MCF 10A (cell line): ENCODE measurements at regions of chr15 and their contacts with region 1.

Region 1: GRCh38 chr15:64731012-64731806 is 44.2 kb downstream of the RBPMS2 start:
- DNase-seq: peak; percentile 88
- H3K4me3 Mint-ChIP-seq: no peak overlapping the region
- H3K27ac Mint-ChIP-seq: no peak overlapping the region
- H3K4me1 Mint-ChIP-seq: peaks cover 16% of the 10 kb centered on the region
- H3K27me3 Mint-ChIP-seq: peaks cover 10% of the 10 kb centered on the region
- CTCF ChIP-seq: peak; percentile 88

Region 2: GRCh38 chr15:64681424-64682024 is 49.7 kb before region 1 on chr15:
- CTCF ChIA-PET with region 1: interaction called, 274 read pairs
- POLR2A ChIA-PET with region 1: interaction called, 8 read pairs
- intact Hi-C with region 1: loop called (anchors 1 kb)
- DNase-seq: peak; percentile 68
- H3K4me3 Mint-ChIP-seq: no peak overlapping the region
- H3K27ac Mint-ChIP-seq: no peak overlapping the region
- H3K4me1 Mint-ChIP-seq: no peaks in the 10 kb centered on the region
- H3K27me3 Mint-ChIP-seq: no peaks in the 10 kb centered on the region
- CTCF ChIP-seq: peak; percentile 72

Region 3: DNA sequence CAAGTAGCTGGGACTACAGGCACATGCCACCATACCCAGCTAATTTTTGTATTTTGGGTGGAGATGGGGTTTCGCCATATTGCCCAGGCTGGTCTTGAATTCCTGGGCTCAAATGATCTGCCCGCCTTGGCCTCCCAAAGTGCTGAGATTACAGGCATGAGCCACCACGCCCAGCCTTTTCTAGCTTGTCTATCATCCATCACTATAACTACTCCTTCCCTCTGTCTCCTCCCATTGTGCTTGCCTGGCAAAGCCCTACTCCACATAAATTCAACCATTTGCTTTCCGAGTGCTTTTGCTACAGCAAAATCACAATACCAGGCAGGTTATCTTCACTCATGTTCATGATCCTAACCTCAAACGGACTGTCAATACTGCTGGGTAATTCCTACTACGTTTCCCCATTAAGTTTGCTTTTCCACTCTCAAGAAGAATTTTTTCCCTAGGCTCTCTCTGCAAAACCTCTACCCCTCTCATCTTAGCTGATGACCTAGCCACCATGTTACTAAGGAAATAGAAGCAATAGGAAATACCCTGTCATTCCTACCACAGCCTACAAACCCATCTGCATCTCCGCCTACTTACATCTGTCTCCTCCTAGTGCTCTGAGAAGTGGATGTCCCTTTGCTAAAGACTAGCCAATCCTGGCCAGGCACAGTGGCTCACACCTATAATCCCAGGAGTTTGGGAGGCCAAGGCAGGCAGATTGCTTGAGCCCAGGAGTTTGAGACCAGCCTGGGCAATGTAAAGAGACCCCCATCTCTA is 20.4 kb before region 1 on chr15:
- CTCF ChIA-PET with region 1: interaction called, 17 read pairs
- POLR2A ChIA-PET with region 1: no interaction called
- intact Hi-C with region 1: no loop called
- DNase-seq: no peak
- H3K4me3 Mint-ChIP-seq: no peak overlapping the region
- H3K27ac Mint-ChIP-seq: no peak overlapping the region
- H3K4me1 Mint-ChIP-seq: no peaks in the 10 kb centered on the region
- H3K27me3 Mint-ChIP-seq: no peaks in the 10 kb centered on the region
- CTCF ChIP-seq: no peak

Region 4: DNA sequence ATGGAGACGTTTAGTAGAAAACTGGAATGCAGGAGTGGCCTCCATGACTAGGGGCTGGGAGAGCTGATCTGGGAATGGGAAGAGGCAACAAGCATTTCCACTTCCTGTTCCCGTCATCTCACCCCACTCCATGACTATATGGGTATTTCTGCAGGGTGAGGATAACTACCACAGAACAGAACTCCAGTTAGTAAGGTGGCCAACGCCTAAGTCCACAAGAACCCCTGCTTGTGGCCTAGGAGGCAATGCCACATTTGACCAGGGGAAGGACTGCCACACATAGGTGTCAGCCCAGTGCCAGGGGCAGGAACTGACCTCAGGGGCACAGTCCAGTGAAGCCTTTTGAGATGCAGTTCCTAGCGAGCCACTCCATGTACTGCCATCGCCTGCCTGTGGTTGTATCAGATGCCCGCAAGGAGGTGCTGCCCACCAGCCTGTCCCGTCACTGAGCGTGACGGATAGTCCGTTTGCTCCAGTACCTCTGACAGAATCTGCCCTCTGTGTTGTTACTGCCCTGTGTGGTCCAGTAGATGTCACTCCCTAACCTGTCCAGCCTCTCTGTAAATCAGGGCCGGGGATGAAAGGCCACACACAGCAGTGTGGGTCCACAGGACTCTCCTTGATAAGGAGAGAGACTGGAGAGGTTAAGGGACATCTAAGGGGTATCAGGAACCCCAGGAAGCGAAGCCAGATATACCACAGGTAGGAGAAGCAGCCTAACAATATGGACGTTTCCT is 301.8 kb after region 1 on chr15:
- CTCF ChIA-PET with region 1: interaction called, 4 read pairs
- POLR2A ChIA-PET with region 1: no interaction called
- intact Hi-C with region 1: loop called (anchors 5 kb)
- DNase-seq: peak; percentile 84
- H3K4me3 Mint-ChIP-seq: no peak overlapping the region
- H3K27ac Mint-ChIP-seq: no peak overlapping the region
- H3K4me1 Mint-ChIP-seq: peaks cover 7% of the 10 kb centered on the region
- H3K27me3 Mint-ChIP-seq: no peaks in the 10 kb centered on the region
- CTCF ChIP-seq: peak; percentile 45

Region 5: DNA sequence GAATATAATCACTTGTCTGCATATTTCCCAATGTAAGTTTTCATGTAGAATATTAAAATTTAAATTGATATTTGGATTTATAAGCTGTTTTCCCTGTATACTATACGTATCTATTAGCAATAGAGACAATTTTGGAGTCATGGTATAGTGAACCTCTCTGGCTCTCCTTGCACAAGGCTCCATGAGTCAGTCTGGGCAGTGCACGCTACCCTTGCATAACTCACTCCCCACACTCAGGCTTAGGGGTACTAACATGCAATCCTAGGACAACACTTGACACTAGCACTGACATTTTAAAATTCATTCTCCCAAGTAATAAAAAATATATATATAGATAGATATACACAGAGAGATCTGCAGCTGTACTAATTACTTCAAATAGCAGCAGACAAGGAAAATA is 929.7 kb after region 1 on chr15:
- CTCF ChIA-PET with region 1: no interaction called
- POLR2A ChIA-PET with region 1: no interaction called
- intact Hi-C with region 1: no loop called
- DNase-seq: peak; percentile 68
- H3K4me3 Mint-ChIP-seq: no peak overlapping the region
- H3K27ac Mint-ChIP-seq: no peak overlapping the region
- H3K4me1 Mint-ChIP-seq: no peaks in the 10 kb centered on the region
- H3K27me3 Mint-ChIP-seq: no peaks in the 10 kb centered on the region
- CTCF ChIP-seq: no peak